ENCODE measurements at regions of chr3 and their contacts with region 1.

Region 1: GRCh38 chr3:42247576-42248027 is 18.4 kb downstream of the CCK start:
- DNase-seq: peak; percentile 78
- ATAC-seq: peak; percentile 71
- H3K4me3 Mint-ChIP-seq: no peak overlapping the region
- H3K27ac Mint-ChIP-seq: no peak overlapping the region
- H3K4me1 Mint-ChIP-seq: peaks cover 7% of the 10 kb centered on the region
- H3K27me3 Mint-ChIP-seq: peaks cover 12% of the 10 kb centered on the region

Region 2: DNA sequence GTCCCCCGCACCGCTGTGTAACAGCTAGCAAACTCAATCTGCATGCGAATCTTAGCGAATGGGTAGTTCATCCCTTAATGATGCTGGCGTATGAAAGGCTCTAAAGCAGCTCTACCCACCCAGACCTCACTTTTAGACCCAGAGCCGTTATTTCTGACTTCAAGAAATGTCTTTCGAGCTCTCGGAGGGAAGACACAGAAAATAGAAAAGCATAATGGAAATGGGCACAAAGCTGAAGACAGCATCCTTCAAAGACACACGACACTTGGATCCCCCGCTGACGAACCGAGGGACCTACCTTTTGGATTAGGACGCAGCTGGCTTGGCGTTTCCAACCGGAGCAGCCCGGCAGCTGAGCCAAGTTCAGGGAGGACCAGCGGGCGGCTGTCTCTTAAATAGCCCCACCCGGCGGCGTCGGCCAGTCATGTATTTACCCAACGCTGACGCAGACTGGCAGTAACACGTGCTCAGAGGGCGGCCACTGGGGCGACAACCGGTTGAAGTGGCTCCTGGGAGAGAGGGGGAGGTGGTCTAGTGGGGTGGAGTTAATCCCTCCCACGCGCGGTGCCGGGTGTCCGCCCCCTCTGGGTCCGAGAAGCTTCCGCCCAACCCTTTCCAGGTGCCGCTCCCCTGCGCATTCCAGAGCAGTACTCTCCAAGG is 16.9 kb after region 1 on chr3:
- CTCF ChIA-PET with region 1: interaction called, 22 read pairs
- POLR2A ChIA-PET with region 1: no interaction called
- intact Hi-C with region 1: loop called in 1 of 2 experiments (anchors 1 kb)
- DNase-seq: peak; percentile 60
- ATAC-seq: peak; percentile 58
- H3K4me3 Mint-ChIP-seq: no peak overlapping the region
- H3K27ac Mint-ChIP-seq: no peak overlapping the region
- H3K4me1 Mint-ChIP-seq: peaks cover 9% of the 10 kb centered on the region
- H3K27me3 Mint-ChIP-seq: peaks cover 57% of the 10 kb centered on the region

Region 3: DNA sequence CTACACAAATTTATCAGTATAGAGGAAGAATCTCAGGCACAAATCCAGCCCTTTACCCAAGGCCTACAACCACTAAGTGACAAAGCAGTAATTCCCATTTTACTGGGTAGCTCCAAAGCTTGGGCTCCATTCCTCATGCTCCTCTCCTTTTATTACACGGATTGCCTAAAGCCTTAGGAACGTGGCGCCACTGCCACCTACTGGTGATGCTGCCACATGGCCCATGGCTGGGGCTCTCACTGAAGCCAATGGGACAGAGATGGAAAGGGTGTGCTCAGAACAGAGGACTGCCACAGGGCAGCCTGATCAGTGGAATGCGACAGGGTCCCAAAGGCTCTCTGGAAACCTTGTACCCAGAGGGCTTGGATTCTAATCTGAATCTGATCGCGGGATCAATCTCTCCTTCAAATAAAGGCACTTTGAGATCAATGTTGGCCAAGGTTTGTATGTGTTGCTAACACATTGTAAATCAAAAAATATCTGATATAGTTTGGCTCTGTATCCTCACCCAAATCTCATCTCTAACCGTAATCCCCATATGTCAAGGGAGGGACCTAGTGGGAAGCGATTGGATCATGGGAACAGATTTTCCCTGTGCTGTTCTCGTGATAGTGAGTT is 196.3 kb after region 1 on chr3:
- CTCF ChIA-PET with region 1: interaction called, 99 read pairs
- POLR2A ChIA-PET with region 1: no interaction called
- intact Hi-C with region 1: loop called (anchors 1 kb)
- DNase-seq: peak; percentile 89
- ATAC-seq: peak; percentile 96
- H3K4me3 Mint-ChIP-seq: no peak overlapping the region
- H3K27ac Mint-ChIP-seq: no peak overlapping the region
- H3K4me1 Mint-ChIP-seq: no peaks in the 10 kb centered on the region
- H3K27me3 Mint-ChIP-seq: peaks cover 2% of the 10 kb centered on the region

Region 4: DNA sequence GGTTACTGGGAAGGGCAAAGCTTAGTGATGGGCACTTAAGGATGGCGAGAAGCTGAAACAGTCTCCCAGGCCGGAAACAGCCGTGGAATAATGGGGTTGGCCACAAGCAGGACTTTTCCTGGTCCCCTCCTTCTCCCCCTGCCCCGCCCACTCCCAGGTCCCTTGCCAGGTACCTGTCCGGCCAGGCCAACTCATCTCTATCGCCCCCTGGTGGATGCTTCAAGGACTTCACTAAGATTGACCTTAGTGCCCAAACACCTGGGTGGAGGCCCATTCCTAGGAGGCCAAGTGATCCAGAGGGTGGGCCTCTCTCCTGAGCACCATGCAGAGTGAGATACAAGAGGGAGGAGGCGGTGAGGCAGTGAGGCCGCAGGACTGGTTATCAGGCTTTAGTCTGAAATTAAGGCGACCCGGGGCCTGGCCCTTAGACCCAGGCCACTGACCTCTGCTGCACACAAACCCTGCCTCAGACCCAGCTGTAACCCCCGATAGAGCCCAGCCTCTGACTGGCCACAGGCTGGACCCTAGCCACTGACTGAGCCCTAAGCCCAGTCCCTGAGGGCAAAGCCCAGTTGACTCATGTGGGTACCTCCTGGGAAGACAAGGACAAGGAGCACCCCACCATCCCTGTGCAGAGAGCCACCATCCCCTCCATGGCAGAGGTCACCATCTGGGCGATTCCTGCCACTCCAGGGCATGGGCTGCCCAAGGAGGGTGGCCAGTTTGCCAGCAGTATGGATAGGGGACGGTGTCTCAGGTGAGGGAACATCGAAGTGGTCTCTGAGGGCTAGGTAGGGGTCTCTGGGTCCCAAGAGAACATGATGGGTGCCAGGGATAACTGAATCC is 292.5 kb after region 1 on chr3:
- CTCF ChIA-PET with region 1: interaction called, 5 read pairs
- POLR2A ChIA-PET with region 1: no interaction called
- intact Hi-C with region 1: loop called (anchors 1 to 5 kb)
- DNase-seq: peak; percentile 78
- ATAC-seq: peak; percentile 73
- H3K4me3 Mint-ChIP-seq: no peak overlapping the region
- H3K27ac Mint-ChIP-seq: no peak overlapping the region
- H3K4me1 Mint-ChIP-seq: peaks cover 4% of the 10 kb centered on the region
- H3K27me3 Mint-ChIP-seq: no peaks in the 10 kb centered on the region

Region 5: DNA sequence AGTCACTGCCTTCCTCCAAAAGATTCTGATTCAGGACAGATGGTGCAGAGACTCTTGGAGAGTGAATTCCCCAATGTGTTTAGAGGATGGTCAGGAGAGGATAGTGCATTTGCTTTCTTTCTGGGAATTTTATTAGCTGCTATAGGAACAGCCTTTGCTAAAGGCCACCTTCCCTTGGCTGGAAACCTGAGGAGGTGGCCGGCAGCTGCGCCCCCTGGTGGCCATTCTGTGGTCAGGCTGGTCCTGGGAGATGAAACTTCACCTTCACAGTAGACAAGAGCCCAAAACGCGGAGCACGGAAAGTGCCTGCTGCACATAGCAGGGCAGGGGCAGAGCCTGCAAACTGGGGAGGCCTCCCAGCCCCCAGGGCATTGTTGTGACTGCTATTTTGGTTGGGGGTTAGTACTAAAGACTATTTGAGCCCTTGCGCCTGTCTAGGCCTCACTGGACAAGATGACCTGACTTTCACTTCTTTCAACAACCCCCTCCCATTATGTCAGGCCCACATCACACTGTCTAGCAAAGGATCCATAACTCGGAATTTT is 299.9 kb after region 1 on chr3:
- CTCF ChIA-PET with region 1: interaction called, 11 read pairs
- POLR2A ChIA-PET with region 1: no interaction called
- intact Hi-C with region 1: loop called in 1 of 2 experiments (anchors 1 kb)
- DNase-seq: peak; percentile 80
- ATAC-seq: peak; percentile 77
- H3K4me3 Mint-ChIP-seq: no peak overlapping the region
- H3K27ac Mint-ChIP-seq: no peak overlapping the region
- H3K4me1 Mint-ChIP-seq: no peaks in the 10 kb centered on the region
- H3K27me3 Mint-ChIP-seq: no peaks in the 10 kb centered on the region

Region 6: DNA sequence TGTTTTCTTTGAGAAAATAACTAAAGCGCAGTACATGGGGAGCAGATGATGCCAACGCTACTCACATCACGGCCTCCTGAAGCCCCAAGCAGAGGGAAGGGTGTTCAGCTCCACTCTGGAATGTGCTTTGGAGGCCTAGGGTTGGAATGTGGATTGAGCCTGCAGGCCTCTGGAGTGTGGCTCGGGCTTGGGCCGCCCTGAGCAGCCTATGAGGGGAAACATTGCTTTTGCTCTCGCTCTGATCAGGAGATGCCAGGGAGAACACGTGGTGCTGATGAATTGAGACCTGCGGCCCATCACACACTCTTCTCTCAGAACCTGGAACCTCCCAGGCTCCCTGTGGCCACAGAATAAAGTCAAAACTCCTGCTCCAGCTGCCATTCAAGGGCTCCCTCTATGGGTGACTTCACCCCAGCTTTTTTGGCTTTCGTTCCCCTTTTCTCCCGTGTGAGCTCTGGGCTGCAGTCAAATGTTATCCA is 502.2 kb after region 1 on chr3:
- CTCF ChIA-PET with region 1: no interaction called
- POLR2A ChIA-PET with region 1: no interaction called
- intact Hi-C with region 1: loop called in 1 of 2 experiments (anchors 10 kb)
- DNase-seq: peak; percentile 33
- ATAC-seq: peak; percentile 55
- H3K4me3 Mint-ChIP-seq: no peak overlapping the region
- H3K27ac Mint-ChIP-seq: no peak overlapping the region
- H3K4me1 Mint-ChIP-seq: peaks cover 30% of the 10 kb centered on the region
- H3K27me3 Mint-ChIP-seq: no peaks in the 10 kb centered on the region

Measured in activated CD4-positive, alpha-beta T cell treated with anti-CD3 and anti-CD28 coated beads for 36 hours (primary cell).